ENCODE measurements at regions of chr9 and their contacts with region 1.

Region 1: DNA sequence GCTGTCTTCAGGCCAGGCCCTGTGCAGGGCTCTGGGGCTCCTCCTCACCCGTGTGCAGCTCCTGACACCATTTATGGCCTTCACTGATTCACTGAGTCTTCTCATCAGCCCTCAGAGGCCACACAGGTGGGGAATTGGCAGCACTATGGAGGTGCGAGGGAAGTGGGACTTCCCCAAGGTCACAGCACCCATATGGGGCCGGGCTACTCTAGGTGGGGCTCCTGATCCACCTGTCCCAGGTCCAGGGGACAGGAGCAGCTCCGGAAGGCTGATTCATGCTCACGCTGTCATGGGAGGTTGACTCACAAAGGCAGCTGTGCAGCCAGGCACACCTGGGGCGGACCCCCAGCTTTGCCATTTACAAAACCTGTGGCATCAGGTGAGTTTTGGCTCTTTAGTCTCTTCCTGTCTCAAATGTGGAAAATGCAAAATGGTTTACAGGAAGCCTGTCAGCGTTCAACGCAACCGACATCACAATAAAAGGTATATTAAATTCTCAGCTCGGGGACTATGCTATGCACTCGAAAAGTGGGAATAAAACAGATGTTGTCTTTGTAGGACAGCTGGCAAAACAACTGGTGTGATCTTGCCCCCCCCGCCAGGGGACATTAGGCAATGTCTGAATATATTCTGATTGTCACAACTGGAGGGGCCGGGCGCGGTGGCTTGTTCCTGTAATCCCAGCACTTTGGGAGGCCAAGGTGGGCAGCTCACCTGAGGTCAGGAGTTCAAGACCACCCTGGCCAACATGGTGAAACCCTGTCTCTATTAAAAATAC is 15.0 kb downstream of the NAIF1 start:
- DNase-seq: no peak
- H3K4me3 ChIP-seq: no peak overlapping the region
- H3K27ac ChIP-seq: no peak overlapping the region
- H3K4me1 ChIP-seq: peaks cover 0 to 23% (median 19%) of the 10 kb centered on the region in 4 donors
- H3K27me3 ChIP-seq: no peaks in the 10 kb centered on the region
- CTCF ChIP-seq: no peak
- EP300 ChIP-seq: no peak
- POLR2A ChIP-seq: no peak

Region 2: DNA sequence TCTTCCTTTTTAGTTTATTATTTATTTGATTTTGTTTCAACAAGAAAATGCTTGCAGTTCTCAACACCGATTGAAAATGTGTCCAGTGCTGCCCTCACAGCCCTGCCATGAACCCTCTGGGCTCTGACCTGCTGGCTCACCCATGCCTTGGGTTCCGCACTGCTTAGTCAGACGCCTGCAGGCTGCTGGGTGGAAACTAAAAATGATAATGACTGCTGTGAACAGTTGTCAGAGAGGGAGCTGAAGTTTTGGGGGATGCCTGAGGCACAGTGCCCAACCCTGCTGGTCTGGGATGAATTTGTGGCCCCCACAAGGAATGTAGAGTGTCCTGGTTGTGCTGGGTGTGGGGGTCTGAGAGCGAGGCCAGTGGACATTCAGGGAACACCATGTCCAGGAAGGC is 367.5 kb before region 1 on chr9:
- intact Hi-C with region 1: no loop called
- DNase-seq: no peak
- H3K4me3 ChIP-seq: no peak overlapping the region
- H3K27ac ChIP-seq: no peak overlapping the region
- H3K4me1 ChIP-seq: no peaks in the 10 kb centered on the region
- H3K27me3 ChIP-seq: no peaks in the 10 kb centered on the region
- CTCF ChIP-seq: no peak
- EP300 ChIP-seq: no peak
- POLR2A ChIP-seq: no peak

Region 3: DNA sequence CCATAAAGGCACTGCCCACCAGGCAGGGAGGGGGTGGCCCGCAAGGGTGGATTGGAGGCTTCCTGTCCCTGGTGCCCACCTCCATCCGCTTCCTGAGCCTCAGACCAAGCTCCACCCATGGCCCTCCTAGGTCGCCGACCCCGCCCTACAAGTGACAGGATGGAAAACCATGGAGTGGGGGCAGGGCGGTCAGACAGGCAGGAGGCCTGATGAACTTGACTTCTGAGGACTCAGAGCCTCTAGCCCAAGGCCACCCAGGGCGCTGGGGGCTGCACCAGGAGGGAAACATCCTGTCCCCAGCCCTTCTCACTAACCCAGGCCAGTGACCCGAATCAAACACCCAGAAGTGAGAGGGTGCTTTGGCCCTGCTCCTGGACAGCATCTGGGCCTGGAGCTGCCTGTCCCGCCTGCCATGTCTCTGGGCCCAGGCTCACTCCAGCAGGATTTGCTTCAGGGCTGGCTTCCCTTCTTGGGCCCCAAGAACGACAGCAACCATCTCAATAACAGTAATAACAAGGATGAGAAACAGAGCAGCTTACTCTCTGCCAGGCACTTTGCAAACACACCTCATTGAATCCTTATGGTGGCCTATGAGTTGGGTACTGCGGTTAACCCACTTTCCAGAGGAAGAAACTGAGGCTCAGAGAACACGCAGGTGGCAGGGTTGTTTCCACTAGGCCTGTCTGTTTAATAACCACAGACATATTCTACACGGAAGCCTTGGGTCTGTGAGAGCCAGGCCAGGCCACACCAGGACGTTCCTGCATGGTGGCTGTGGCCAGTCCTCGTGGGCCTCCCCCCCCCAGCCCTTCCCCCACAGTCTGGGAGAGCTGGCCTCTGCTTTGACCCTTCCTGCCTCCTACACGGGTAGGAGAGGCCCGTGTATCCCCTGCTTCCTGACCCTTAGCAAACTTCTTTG is 148.3 kb before region 1 on chr9:
- intact Hi-C with region 1: no loop called
- DNase-seq: peak; percentile 84
- H3K4me3 ChIP-seq: no peak overlapping the region
- H3K27ac ChIP-seq: peak overlapping the region; percentile 53 to 72 (median 63)
- H3K4me1 ChIP-seq: peaks cover 0 to 38% (median 31%) of the 10 kb centered on the region in 4 donors
- H3K27me3 ChIP-seq: no peaks in the 10 kb centered on the region
- CTCF ChIP-seq: no peak
- EP300 ChIP-seq: no peak
- POLR2A ChIP-seq: peak in 1 of 2 donors; percentile 44

Region 4: GRCh38 chr9:127916665-127917613 is 135.2 kb before region 1 on chr9 and contains the start of gene ST6GALNAC4:
- intact Hi-C with region 1: no loop called
- DNase-seq: peak; percentile 97
- H3K4me3 ChIP-seq: peak within 1 kb of the TSS; percentile 51 to 68 (median 66)
- H3K27ac ChIP-seq: peak within 1 kb of the TSS; percentile 72 to 81 (median 78)
- H3K4me1 ChIP-seq: peaks cover 0 to 55% (median 50%) of the 10 kb centered on the region in 4 donors
- H3K27me3 ChIP-seq: no peaks in the 10 kb centered on the region
- CTCF ChIP-seq: no peak
- EP300 ChIP-seq: no peak
- POLR2A ChIP-seq: peak in 1 of 2 donors; percentile 39
- total RNA-seq, gene ST6GALNAC4: 22.8 to 27.7 (median 25.5) TPM

Region 5: GRCh38 chr9:128078504-128079434 is 26.6 kb after region 1 on chr9:
- intact Hi-C with region 1: loop called (anchors 1 kb)
- DNase-seq: no peak
- H3K4me3 ChIP-seq: no peak overlapping the region
- H3K27ac ChIP-seq: peak overlapping the region in 3 of 4 donors; percentile 2 to 42 (median 35)
- H3K4me1 ChIP-seq: peaks cover 0 to 57% (median 55%) of the 10 kb centered on the region in 4 donors
- H3K27me3 ChIP-seq: no peaks in the 10 kb centered on the region
- CTCF ChIP-seq: no peak
- EP300 ChIP-seq: no peak
- POLR2A ChIP-seq: no peak

Measured in sigmoid colon (tissue), 7 donors.